Activated B cell treated with CpG ODN at 0.5 μM for 24 hours (primary cell): ENCODE measurements at regions of chr2 and their contacts with region 1.

Region 1: DNA sequence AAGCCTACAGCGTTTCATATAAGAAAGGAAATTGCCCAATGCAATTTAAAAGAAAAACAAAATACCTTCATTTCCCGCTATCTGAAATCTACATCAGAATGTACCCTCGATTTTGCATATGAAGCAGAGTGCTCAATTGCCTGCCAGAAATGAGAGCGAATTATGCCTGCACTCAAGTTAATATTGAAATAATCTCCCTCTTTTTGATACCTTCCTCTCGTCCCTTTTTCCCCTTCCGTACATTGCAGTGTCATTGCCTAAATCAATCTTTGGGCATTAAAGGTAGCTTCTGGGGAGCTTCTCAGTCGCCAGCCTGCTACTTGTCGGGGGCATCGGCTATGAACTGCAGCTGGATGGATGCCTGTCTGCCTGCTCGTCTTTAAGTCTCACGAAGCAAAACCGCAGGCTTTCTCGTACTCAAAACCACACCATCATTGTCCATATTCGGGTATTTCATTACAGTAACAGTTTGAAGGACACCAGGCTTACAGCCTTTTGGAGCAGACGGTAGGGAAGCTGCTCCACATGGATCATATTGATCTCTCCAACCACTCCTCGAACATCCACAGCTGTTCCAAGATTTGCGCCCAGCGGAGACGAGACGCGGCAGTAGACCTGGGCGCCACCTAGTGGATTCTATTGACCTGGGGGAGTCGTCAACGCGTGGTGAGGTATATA is 64.0 kb upstream of the HNRNPA3 start:
- DNase-seq: peak; percentile 46
- ATAC-seq: peak; percentile 84
- H3K4me3 Mint-ChIP-seq: peak overlapping the region; percentile 89
- H3K27ac Mint-ChIP-seq: peak overlapping the region; percentile 36
- H3K4me1 Mint-ChIP-seq: peaks cover 15% of the 10 kb centered on the region
- H3K27me3 Mint-ChIP-seq: peaks cover 14% of the 10 kb centered on the region
- CTCF ChIP-seq: peak; percentile 36

Region 2: DNA sequence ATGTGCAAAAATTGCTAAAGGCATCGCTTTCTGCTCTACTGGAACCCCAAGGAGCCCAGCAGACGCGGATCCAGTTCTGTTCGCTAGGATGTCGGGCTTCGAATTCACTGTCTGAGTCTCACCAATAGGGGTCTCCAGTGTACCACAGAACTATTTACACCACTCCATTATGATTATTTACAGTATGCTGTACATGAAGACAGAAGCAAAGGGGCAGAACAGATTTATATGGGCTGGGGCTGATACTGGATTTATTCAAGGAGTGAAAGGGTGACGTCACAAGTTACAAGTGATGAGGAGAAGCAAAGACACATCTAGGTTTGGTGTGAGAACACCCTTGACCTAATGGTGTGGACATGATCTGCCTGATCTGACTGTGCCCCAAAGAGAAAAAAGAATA is 1781.8 kb before region 1 on chr2:
- CTCF ChIA-PET with region 1: no interaction called
- POLR2A ChIA-PET with region 1: no interaction called
- intact Hi-C with region 1: loop called (anchors 10 kb)
- DNase-seq: no peak
- ATAC-seq: no peak
- H3K4me3 Mint-ChIP-seq: no peak overlapping the region
- H3K27ac Mint-ChIP-seq: no peak overlapping the region
- H3K4me1 Mint-ChIP-seq: no peaks in the 10 kb centered on the region
- H3K27me3 Mint-ChIP-seq: peaks cover 9% of the 10 kb centered on the region
- CTCF ChIP-seq: peak; percentile 57

Region 3: GRCh38 chr2:176454893-176455811 is 693.5 kb before region 1 on chr2:
- CTCF ChIA-PET with region 1: interaction called, 3 read pairs
- POLR2A ChIA-PET with region 1: no interaction called
- intact Hi-C with region 1: loop called (anchors 1 kb)
- DNase-seq: peak; percentile 62
- ATAC-seq: peak; percentile 61
- H3K4me3 Mint-ChIP-seq: no peak overlapping the region
- H3K27ac Mint-ChIP-seq: no peak overlapping the region
- H3K4me1 Mint-ChIP-seq: peaks cover 4% of the 10 kb centered on the region
- H3K27me3 Mint-ChIP-seq: peaks cover 11% of the 10 kb centered on the region
- CTCF ChIP-seq: peak; percentile 81

Region 4: DNA sequence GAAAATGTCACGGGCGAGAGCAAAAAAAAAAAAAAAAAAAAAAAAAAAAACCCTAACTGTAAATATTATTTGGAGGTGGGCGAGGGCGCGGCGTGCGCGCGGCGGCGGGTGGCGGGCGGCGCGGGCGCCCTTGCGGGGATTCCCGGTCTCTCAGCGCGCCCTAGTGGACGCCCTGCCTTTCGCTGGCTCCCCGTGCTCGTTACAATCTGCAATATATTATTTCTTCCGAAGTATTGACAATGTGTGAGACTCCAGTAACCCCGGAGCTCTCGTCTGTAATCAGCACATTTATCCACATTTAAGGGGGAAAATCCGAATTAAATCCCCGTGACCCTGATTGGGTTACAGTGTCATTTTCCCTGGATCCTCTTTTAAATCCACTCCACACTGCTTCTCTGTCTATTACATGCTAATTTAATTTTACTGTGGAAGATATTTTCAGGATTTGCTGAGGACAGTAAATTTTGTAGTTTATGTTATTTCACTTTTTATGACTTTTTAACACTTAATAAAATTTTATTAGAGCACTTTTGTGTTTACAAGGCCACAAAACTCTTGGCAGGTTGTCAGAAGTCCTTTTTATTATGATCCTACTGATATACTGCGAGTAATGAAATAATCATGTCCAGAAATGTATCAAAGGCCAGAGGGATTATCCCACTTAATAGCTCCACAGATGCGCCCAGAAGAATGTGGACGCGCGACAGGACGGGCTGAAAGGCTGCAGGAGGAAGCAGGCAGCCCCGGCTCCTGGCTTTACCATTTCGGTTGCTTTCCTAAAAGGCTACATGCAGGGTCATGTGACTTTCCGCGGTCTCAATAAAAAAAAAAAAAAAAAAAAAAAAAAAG is 510.2 kb before region 1 on chr2:
- CTCF ChIA-PET with region 1: no interaction called
- POLR2A ChIA-PET with region 1: no interaction called
- intact Hi-C with region 1: loop called (anchors 5 kb)
- DNase-seq: peak; percentile 24
- ATAC-seq: peak; percentile 79
- H3K4me3 Mint-ChIP-seq: peak overlapping the region; percentile 66
- H3K27ac Mint-ChIP-seq: no peak overlapping the region
- H3K4me1 Mint-ChIP-seq: peaks cover 3% of the 10 kb centered on the region
- H3K27me3 Mint-ChIP-seq: peaks cover 45% of the 10 kb centered on the region
- CTCF ChIP-seq: peak; percentile 64

Region 5: GRCh38 chr2:176745543-176746200 is 402.9 kb before region 1 on chr2:
- CTCF ChIA-PET with region 1: no interaction called
- POLR2A ChIA-PET with region 1: no interaction called
- intact Hi-C with region 1: loop called (anchors 5 kb)
- DNase-seq: no peak
- ATAC-seq: no peak
- H3K4me3 Mint-ChIP-seq: no peak overlapping the region
- H3K27ac Mint-ChIP-seq: no peak overlapping the region
- H3K4me1 Mint-ChIP-seq: peaks cover 3% of the 10 kb centered on the region
- H3K27me3 Mint-ChIP-seq: peaks cover 3% of the 10 kb centered on the region
- CTCF ChIP-seq: no peak

Region 6: DNA sequence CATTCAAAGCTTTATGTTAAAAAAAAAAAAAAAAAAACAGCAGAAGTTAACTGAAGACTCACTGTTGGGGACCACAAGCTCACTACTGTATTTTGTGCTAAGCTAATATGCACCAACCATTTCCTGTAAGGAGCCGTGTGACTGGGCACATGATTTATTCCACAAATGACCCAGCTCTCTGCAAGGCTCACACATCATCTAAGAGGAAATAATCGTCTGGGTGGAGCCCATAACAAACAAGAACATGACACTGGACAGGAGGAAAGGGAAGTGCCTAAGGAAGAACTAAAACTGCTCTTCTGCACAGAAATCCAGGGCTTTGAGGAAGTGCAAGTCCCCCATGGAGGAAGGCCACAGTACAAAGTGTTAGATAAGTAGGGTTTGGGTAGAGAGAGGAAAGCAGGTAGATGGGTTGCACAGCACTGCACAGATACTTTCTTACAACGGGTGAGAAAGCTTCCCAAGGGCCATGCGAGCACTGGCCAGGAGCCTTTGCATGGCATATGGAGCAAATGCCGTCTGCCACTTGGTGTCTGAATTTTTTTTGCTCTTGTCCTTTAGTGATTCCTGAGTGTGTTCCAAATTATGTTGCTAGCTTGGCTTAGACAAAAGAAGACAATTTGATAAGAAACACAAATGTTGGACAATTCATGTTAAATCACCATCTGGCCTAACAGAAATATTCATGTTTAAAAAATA is 91.5 kb after region 1 on chr2:
- CTCF ChIA-PET with region 1: no interaction called
- POLR2A ChIA-PET with region 1: no interaction called
- intact Hi-C with region 1: no loop called
- DNase-seq: no peak
- ATAC-seq: peak; percentile 84
- H3K4me3 Mint-ChIP-seq: peak overlapping the region; percentile 49
- H3K27ac Mint-ChIP-seq: peak overlapping the region; percentile 70
- H3K4me1 Mint-ChIP-seq: peaks cover 74% of the 10 kb centered on the region
- H3K27me3 Mint-ChIP-seq: no peaks in the 10 kb centered on the region
- CTCF ChIP-seq: no peak

Region 7: DNA sequence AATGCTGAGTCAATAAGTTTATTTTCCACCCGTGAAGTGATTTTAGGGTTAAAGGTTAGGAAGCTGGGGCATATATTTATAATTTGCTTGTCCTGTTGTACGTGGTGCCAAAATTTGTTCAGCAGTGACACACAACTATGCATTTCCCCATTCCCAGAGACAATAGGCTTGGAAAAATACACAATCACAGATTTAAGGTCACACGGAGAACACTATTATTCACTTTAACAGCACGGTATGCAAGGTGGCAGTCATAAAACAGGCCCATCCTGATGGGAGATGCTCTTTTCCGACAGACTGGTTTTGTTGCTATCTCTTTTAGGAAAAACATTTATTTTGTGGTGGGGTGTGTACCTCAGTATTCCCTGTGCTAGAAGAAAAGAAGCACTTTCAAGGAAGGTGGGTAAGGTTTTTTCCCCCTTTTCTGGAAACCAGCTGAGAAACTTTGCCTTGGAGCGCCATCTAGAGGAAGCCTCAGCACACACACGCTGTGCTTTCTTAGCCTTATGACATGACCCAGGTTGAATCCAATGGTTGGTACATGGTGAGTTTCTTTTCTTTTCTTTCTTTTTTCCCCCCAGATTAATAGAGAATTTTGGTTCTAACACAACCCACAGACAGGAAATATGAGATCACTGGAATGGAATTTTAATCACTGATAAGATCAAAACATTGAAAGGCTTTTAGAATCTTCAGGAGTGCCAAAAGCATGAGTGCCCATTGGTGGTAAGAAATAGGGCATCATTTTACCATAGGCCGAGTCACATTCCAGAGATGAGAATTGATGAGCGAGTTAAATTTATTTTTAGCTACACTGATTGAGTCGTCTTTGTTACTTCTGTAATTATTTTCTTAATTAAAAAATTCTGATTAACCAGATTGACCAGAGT is 576.0 kb after region 1 on chr2:
- CTCF ChIA-PET with region 1: no interaction called
- POLR2A ChIA-PET with region 1: no interaction called
- intact Hi-C with region 1: loop called (anchors 5 kb)
- DNase-seq: no peak
- ATAC-seq: peak; percentile 60
- H3K4me3 Mint-ChIP-seq: no peak overlapping the region
- H3K27ac Mint-ChIP-seq: no peak overlapping the region
- H3K4me1 Mint-ChIP-seq: no peaks in the 10 kb centered on the region
- H3K27me3 Mint-ChIP-seq: peaks cover 14% of the 10 kb centered on the region
- CTCF ChIP-seq: peak; percentile 45